Activated B cell treated with CpG ODN at 0.5 μM for 24 hours (primary cell): ENCODE measurements at regions of chr3 and their contacts with region 1.

Region 1: GRCh38 chr3:136152176-136152843 is 43.8 kb downstream of the MSL2 start:
- DNase-seq: no peak
- ATAC-seq: no peak
- H3K4me3 Mint-ChIP-seq: no peak overlapping the region
- H3K27ac Mint-ChIP-seq: no peak overlapping the region
- H3K4me1 Mint-ChIP-seq: peaks cover 43% of the 10 kb centered on the region
- H3K27me3 Mint-ChIP-seq: no peaks in the 10 kb centered on the region
- CTCF ChIP-seq: no peak

Region 2: GRCh38 chr3:136171097-136171542 is 18.8 kb after region 1 on chr3:
- CTCF ChIA-PET with region 1: no interaction called
- POLR2A ChIA-PET with region 1: no interaction called
- intact Hi-C with region 1: loop called (anchors 2 kb)
- DNase-seq: no peak
- ATAC-seq: no peak
- H3K4me3 Mint-ChIP-seq: no peak overlapping the region
- H3K27ac Mint-ChIP-seq: peak overlapping the region; percentile 74
- H3K4me1 Mint-ChIP-seq: peaks cover 43% of the 10 kb centered on the region
- H3K27me3 Mint-ChIP-seq: no peaks in the 10 kb centered on the region
- CTCF ChIP-seq: no peak